Aorta (tissue), 5 donors: ENCODE measurements at regions of chr17 and their contacts with region 1.

Region 1: DNA sequence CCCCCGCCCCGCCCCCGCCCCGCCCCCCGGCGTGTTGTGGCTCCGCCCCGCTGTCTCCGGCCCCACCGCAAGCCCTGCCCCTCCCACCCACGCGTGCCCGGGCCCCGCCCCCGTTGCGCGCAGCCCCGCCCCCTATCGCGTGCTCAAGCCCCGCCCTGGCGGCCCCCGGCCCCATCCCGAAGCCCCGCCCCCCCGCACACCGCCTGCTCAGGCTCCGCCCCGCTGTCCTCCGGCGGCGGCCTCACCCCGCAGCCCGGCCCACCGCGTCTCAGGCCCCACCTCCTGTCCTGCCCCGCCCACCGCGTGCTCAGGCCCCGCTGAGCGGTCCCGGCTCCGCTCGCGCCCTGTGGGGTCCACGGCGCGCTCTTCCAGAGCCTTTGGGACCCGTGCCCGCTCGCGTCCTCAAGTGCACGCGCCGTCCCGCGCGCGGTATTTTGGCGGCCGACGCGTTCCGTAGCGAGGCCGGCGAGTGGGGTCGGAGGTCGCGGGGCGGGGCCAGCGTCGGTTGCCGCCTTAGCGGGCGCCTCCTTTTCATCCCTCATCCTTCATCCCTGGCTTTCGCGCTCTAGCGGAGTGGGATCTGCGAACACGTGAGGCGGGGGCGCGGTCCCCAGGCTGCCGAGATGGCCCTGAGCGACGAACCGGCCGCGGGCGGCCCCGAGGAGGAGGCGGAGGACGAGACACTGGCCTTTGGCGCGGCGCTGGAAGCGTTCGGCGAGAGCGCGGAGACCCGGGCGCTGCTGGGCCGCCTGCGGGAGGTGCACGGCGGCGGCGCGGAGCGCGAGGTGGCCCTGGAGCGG is at the start of gene TBCD:
- DNase-seq: peak; percentile 92 to 97
- ATAC-seq: peak; percentile 93
- H3K4me3 ChIP-seq: peak within 1 kb of the TSS; percentile 90 to 91
- H3K27ac ChIP-seq: peak within 1 kb of the TSS in 1 of 2 donors; percentile 45
- H3K4me1 ChIP-seq: no peaks in the 10 kb centered on the region
- H3K27me3 ChIP-seq: no peaks in the 10 kb centered on the region
- total RNA-seq, gene TBCD: 97.1 to 125 TPM

Region 2: DNA sequence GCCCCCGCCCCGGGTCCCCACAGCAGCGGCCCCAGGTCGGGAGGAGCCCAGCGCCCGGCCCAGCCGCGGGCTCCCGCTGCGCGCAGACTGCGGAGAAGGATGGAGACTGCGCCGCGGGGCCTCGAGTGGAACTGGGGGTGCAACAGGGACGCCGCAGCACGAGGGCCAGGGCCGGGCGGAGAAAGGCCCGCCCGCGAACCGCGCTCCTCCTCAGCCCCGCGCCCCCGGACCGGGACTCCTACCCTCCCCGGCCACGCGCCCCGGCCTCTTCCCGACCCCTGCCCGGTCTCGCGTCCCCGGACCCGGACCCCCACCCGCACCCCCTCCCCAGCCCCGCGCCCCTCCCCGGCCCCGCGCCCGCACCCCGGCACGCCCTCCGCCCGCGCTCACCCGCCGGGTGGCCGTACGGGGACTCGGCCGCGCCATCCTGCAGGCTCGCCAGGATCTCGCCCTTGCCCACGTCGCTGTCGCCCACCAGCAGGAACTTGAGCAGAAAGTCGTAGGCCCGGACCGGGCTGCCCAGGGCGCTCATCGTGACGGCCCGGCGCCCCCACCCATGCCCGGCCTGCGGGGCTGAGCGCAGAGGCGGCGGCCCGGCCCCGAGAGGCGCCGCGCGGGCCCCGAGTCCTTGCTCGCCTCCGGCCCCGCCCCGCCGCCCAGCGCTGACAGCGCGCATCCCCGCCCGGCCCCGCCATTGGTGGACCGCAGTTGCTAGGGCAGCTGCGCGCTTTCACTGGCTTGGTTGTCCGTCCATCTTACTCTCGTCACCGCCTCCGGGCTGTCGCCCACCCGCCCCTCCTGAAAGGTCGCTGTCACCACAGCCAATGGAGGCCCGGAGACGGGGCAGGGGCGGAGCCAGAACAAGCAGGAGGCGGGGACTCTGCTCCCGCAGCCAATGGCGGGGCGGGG is 53.5 kb before region 1 on chr17 and contains the start of gene RAB40B:
- intact Hi-C with region 1: loop called in 1 of 2 experiments (anchors 5 kb)
- DNase-seq: peak; percentile 99 to 100
- ATAC-seq: peak; percentile 98
- H3K4me3 ChIP-seq: peak within 1 kb of the TSS; percentile 92 to 93
- H3K27ac ChIP-seq: no peak within 1 kb of the TSS
- H3K4me1 ChIP-seq: no peaks in the 10 kb centered on the region
- H3K27me3 ChIP-seq: no peaks in the 10 kb centered on the region
- total RNA-seq, gene RAB40B: 4.5 to 10.7 TPM

Region 3: GRCh38 chr17:82716203-82717010 is 35.4 kb before region 1 on chr17 and contains the start of gene FN3KRP:
- intact Hi-C with region 1: loop called in 1 of 2 experiments (anchors 5 kb)
- DNase-seq: peak; percentile 98
- ATAC-seq: peak; percentile 91
- H3K4me3 ChIP-seq: peak within 1 kb of the TSS; percentile 71
- H3K27ac ChIP-seq: no peak within 1 kb of the TSS
- H3K4me1 ChIP-seq: no peaks in the 10 kb centered on the region
- H3K27me3 ChIP-seq: no peaks in the 10 kb centered on the region
- total RNA-seq, gene FN3KRP: 18.6 to 26.7 TPM

Region 4: DNA sequence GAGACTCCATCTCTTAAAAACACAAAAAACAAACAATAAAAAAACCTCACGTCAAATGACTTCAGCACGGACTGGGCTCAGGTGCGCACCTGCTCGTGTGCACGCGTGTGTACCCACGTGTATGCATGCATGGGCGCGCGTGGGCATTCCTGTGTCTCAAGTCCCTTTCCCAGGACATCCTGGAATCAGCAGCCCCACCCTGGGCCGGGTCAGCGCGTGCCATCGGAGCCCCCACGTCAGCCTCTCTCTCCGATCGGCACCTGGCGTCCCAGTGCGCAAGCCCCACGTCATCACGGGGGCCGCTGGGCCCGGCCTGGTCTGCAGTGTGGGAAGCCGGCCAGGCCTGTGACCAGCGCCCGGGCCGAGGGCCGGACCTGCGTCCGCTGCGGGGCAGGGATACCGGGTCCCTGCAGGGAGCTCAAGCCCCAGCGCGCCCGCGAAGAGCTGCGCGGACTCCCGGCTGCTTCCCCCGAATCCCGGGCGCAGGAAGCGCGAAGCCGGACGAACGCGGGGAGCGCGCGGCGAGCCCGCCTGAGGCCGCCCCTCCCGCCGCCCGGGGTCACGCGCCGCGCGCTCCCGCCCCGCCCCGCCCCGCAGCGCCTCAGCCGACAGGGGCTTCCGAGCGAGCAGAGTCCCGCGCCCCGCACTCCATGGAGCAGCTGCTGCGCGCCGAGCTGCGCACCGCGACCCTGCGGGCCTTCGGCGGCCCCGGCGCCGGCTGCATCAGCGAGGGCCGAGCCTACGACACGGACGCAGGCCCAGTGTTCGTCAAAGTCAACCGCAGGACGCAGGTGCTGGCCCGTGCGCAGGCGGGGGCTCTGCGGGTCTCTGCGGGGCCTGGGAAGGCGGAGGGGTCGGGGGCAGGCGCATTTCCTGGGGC is 16.5 kb before region 1 on chr17 and contains the start of gene FN3K:
- intact Hi-C with region 1: loop called in 1 of 2 experiments (anchors 2 kb)
- DNase-seq: peak; percentile 77 to 88
- ATAC-seq: peak; percentile 78
- H3K4me3 ChIP-seq: peak within 1 kb of the TSS; percentile 74 to 92
- H3K27ac ChIP-seq: peak within 1 kb of the TSS in 1 of 2 donors; percentile 62
- H3K4me1 ChIP-seq: no peaks in the 10 kb centered on the region
- H3K27me3 ChIP-seq: no peaks in the 10 kb centered on the region
- total RNA-seq, gene FN3K: 10.8 to 23.0 TPM

Region 5: GRCh38 chr17:82836823-82837357 is 85.1 kb after region 1 on chr17:
- intact Hi-C with region 1: no loop called
- DNase-seq: no peak
- ATAC-seq: no peak
- H3K4me3 ChIP-seq: no peak overlapping the region
- H3K27ac ChIP-seq: no peak overlapping the region
- H3K4me1 ChIP-seq: no peaks in the 10 kb centered on the region
- H3K27me3 ChIP-seq: no peaks in the 10 kb centered on the region